ENCODE measurements at regions of chr9 and their contacts with region 1.

Region 1: GRCh38 chr9:130107234-130107861 is 53.6 kb downstream of the GPR107 start:
- H3K4me3 ChIP-seq: no peak overlapping the region
- H3K27ac ChIP-seq: no peak overlapping the region
- H3K4me1 ChIP-seq: no peaks in the 10 kb centered on the region
- CTCF ChIP-seq: peak; percentile 66; the same call in 1 of the 2 replicates

Region 2: GRCh38 chr9:129656795-129657390 is 450.5 kb before region 1 on chr9:
- CTCF ChIA-PET with region 1: no interaction called
- POLR2A ChIA-PET with region 1: no interaction called
- H3K4me3 ChIP-seq: no peak overlapping the region
- H3K27ac ChIP-seq: no peak overlapping the region
- H3K4me1 ChIP-seq: no peaks in the 10 kb centered on the region
- CTCF ChIP-seq: no peak

Region 3: GRCh38 chr9:130053504-130054324 is 53.6 kb before region 1 on chr9 and contains the start of gene GPR107:
- CTCF ChIA-PET with region 1: interaction called, 10 read pairs
- POLR2A ChIA-PET with region 1: interaction called, 4 read pairs
- H3K4me3 ChIP-seq: peak within 1 kb of the TSS; percentile 91
- H3K27ac ChIP-seq: peak within 1 kb of the TSS; percentile 79
- H3K4me1 ChIP-seq: no peaks in the 10 kb centered on the region; the same call in 1 of the 2 replicates
- CTCF ChIP-seq: no peak

Region 4: GRCh38 chr9:130128733-130129431 is 21.5 kb after region 1 on chr9:
- CTCF ChIA-PET with region 1: interaction called, 25 read pairs
- POLR2A ChIA-PET with region 1: no interaction called
- H3K4me3 ChIP-seq: no peak overlapping the region
- H3K27ac ChIP-seq: peak overlapping the region; percentile 48; the same call in 1 of the 2 replicates
- H3K4me1 ChIP-seq: peaks cover 6% of the 10 kb centered on the region
- CTCF ChIP-seq: no peak

Region 5: DNA sequence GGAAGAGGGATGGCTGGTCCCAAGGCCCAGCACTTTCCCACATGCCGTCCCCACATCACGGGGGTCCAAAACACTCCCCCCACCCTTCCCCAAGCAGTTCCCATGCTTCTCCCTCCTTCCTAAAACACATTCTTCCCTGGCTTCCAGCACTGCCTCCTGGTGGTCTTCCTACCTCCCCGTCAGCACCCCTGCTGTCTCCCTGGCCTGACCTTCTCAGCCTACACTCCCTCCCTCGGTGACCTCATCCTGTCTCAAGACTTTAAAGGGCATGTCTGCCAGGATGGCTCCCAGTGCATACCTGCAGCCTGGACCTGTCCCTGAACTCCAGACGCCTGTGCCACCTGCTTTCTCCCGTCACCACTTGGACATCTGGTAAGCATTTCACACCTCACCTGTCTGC is 60.6 kb after region 1 on chr9:
- CTCF ChIA-PET with region 1: interaction called, 25 read pairs
- POLR2A ChIA-PET with region 1: no interaction called
- H3K4me3 ChIP-seq: no peak overlapping the region
- H3K27ac ChIP-seq: no peak overlapping the region
- H3K4me1 ChIP-seq: no peaks in the 10 kb centered on the region
- CTCF ChIP-seq: peak; percentile 35; the same call in 1 of the 2 replicates

Region 6: DNA sequence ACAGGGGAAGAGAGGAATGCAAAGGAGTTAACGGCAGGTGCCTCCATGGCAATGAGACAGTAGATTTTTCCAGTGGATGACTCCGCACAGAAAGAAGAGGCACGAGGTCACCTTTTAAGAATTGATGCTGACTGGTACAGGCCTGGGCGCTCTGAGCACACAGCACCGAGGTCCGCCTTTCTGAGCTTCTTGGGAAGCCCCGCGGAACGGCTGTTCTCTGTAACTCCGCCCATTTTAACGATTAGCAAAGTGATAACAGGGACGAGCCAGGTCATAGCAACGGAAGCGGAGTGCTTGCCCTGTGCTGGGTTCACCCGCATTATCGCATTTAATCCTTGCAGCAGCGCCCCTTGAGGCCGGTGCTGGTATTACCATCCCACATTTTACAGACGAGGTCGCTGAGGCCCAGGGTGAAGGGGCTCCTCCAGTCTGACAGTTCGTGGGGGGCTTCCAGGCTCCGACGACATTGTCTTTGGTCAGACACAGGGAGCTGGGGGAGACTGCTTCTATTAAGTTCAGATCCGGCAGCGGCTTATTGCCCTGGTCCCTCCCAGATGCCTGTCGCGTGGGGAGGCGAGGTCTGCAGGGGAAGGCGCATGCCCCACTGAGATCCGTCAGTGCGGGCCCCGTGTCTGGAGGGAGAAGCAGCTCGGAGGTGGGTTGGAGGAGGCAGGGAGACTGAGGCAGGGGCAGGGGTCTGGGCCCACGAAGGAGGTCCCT is 135.8 kb after region 1 on chr9:
- CTCF ChIA-PET with region 1: interaction called, 217 read pairs
- POLR2A ChIA-PET with region 1: no interaction called
- H3K4me3 ChIP-seq: no peak overlapping the region
- H3K27ac ChIP-seq: no peak overlapping the region
- H3K4me1 ChIP-seq: 0 out of 2 replicates have a peak, but pooled peaks cover 3% of the 10 kb centered on the region
- CTCF ChIP-seq: peak; percentile 80

Measured in HEK293 (cell line).